BJ (cell line): ENCODE measurements at regions of chr16 and their contacts with region 1.

Region 1: GRCh38 chr16:19700319-19700781 is 17.7 kb downstream of the KNOP1 start:
- DNase-seq: no peak
- H3K4me3 ChIP-seq: no peak overlapping the region
- H3K27me3 ChIP-seq: no peaks in the 10 kb centered on the region
- CTCF ChIP-seq: no peak

Region 2: DNA sequence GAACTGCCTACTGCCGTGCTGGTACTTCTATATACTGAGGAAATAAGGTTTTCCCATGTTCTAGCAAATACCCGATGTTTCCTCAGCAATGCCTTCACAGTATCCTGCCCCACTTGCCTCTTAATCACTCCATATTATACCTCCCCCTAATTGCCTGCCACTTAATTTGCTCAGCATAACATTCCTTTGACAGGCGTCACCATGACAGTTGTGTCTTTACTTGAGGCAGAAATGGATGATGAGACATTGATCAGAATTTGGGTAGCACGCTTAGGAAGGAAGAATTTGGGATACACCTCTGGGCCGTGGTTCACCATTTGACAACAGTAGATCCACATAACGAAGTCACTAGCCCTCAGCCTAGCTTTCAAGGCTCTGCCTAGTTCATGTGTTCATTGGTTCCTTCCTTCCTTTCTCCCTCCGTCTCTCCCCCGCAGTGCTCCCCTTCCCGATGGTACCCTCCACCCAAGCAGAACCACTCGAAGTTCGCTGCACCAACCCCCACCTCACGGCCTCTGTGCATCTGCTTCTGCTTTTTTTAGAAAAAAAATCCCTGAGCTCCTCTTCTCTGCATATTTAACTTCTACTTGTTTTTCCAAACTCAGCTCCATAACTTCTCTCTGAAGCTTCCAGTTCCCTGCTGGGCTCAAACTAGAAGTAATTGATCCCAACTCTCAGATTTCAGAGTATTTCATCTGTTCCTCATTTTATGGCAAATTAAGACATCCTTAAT is 37.1 kb after region 1 on chr16:
- CTCF ChIA-PET with region 1: no interaction called
- POLR2A ChIA-PET with region 1: interaction called, 18 read pairs
- DNase-seq: no peak
- H3K4me3 ChIP-seq: no peak overlapping the region
- H3K27me3 ChIP-seq: no peaks in the 10 kb centered on the region
- CTCF ChIP-seq: no peak